CD4-positive, alpha-beta memory T cell (primary cell): ENCODE measurements at regions of chr16 and their contacts with region 1.

Region 1: DNA sequence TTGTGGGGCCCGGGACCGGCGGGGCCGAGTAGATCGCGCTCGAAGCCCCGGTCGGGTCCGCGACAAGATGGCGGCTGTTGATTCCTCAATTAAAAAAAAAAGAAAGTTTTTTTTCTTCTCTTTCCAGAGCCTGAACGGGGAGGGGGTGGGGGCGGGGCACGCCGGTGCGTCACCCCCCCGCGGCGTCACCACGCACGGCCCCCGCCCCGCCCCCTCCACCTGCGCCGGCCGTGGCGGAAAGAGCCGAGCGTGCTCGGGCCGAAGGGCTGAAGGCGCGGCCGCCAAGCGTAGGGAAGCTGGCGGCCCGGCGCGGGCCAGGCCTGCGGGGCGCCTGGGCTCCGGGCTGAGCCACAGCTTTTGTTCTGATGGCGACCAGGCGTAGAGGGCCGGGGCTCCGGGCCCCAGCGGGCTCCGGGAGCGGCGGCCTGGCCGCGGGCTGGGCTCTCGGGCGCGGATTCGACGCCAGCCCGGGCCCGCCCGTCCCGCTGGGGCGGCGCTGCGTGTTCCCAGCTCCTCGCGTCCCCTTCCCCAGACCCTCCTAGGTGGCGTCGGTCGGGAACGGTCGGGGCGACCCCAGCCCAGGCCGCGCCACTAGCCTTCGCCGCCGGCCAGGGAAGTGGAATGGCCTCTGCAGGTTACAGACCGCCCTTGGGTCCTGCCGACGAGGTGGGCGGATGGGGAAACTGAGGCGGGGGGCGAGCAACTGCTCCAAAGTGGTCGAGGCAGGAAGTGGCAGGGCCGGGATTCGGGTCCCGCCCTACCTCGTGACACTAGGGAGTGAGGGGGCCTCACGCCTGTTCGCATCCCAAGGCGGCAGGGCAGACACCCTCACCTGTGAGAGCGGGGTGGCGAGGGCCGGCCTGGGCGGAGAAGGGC is at the start of gene CREBBP:
- DNase-seq: peak; percentile 81 to 91 (median 87)
- H3K4me3 ChIP-seq: peak within 1 kb of the TSS; percentile 58 to 74
- H3K4me3 Mint-ChIP-seq: peak within 1 kb of the TSS; percentile 85 to 98 (median 92)
- H3K27ac ChIP-seq: peak within 1 kb of the TSS; percentile 71
- H3K27ac Mint-ChIP-seq: peak within 1 kb of the TSS; percentile 87 to 95 (median 93)
- H3K4me1 ChIP-seq: peaks cover 43% of the 10 kb centered on the region
- H3K4me1 Mint-ChIP-seq: peaks cover 31 to 46% (median 37%) of the 10 kb centered on the region in 4 donors
- H3K27me3 ChIP-seq: no peaks in the 10 kb centered on the region
- H3K27me3 Mint-ChIP-seq: peaks cover 3 to 5% of the 10 kb centered on the region in 2 donors
- total RNA-seq, gene CREBBP: 119 to 133 TPM

Region 2: GRCh38 chr16:3123986-3124886 is 756.6 kb before region 1 on chr16:
- CTCF ChIA-PET with region 1: no interaction called
- POLR2A ChIA-PET with region 1: no interaction called
- intact Hi-C with region 1: no loop called
- DNase-seq: peak; percentile 96 to 97 (median 96)
- H3K4me3 ChIP-seq: peak overlapping the region; percentile 85 to 97
- H3K4me3 Mint-ChIP-seq: peak overlapping the region; percentile 94 to 98 (median 96)
- H3K27ac ChIP-seq: peak overlapping the region; percentile 50
- H3K27ac Mint-ChIP-seq: peak overlapping the region; percentile 95 to 99 (median 97)
- H3K4me1 ChIP-seq: peaks cover 40% of the 10 kb centered on the region
- H3K4me1 Mint-ChIP-seq: peaks cover 18 to 52% (median 32%) of the 10 kb centered on the region in 4 donors
- H3K27me3 ChIP-seq: no peaks in the 10 kb centered on the region
- H3K27me3 Mint-ChIP-seq: no peaks in the 10 kb centered on the region

Region 3: GRCh38 chr16:3587547-3588110 is 293.2 kb before region 1 on chr16:
- CTCF ChIA-PET with region 1: no interaction called
- POLR2A ChIA-PET with region 1: no interaction called
- intact Hi-C with region 1: no loop called
- DNase-seq: no peak
- H3K4me3 ChIP-seq: no peak overlapping the region
- H3K4me3 Mint-ChIP-seq: no peak overlapping the region
- H3K27ac ChIP-seq: no peak overlapping the region
- H3K27ac Mint-ChIP-seq: no peak overlapping the region
- H3K4me1 ChIP-seq: no peaks in the 10 kb centered on the region
- H3K4me1 Mint-ChIP-seq: peaks cover 0 to 4% (median 1%) of the 10 kb centered on the region in 4 donors
- H3K27me3 ChIP-seq: no peaks in the 10 kb centered on the region
- H3K27me3 Mint-ChIP-seq: no peaks in the 10 kb centered on the region

Region 4: DNA sequence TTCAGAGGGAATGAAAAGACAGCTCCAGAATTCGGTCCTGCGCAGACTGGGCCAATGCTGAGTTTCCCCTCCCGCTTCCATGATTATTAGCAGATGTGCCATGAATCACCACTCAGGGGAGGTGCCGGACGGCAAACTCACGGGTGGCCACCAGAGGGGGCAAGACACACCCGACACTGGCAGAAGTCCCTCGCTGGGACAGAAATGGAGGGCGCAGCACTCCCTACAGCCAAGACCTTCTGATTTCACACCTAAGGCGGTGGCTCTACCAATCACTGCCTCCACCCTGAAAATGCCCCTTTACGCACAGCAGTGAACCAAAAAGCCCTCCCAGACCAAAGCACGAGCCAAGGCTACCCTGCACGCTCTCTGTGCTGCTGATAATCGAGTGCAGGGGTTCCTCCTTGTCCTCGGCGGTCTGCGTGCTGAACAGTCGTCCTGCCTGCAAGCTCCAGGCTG is 190.4 kb before region 1 on chr16:
- CTCF ChIA-PET with region 1: interaction called, 9 read pairs
- POLR2A ChIA-PET with region 1: no interaction called
- intact Hi-C with region 1: loop called (anchors 1 kb)
- DNase-seq: peak; percentile 74 to 81 (median 79)
- H3K4me3 ChIP-seq: no peak overlapping the region
- H3K4me3 Mint-ChIP-seq: peak overlapping the region in 3 of 8 donors; percentile 47 to 70 (median 62)
- H3K27ac ChIP-seq: no peak overlapping the region
- H3K27ac Mint-ChIP-seq: peak overlapping the region in 6 of 7 donors; percentile 20 to 77 (median 40)
- H3K4me1 ChIP-seq: peaks cover 7% of the 10 kb centered on the region
- H3K4me1 Mint-ChIP-seq: peaks cover 6 to 14% (median 9%) of the 10 kb centered on the region in 4 donors
- H3K27me3 ChIP-seq: no peaks in the 10 kb centered on the region
- H3K27me3 Mint-ChIP-seq: no peaks in the 10 kb centered on the region

Region 5: GRCh38 chr16:3717235-3718018 is 163.4 kb before region 1 on chr16 and contains the start of gene TRAP1:
- CTCF ChIA-PET with region 1: interaction called, 3 read pairs
- POLR2A ChIA-PET with region 1: interaction called, 6 read pairs
- intact Hi-C with region 1: loop called (anchors 1 kb)
- DNase-seq: peak; percentile 87 to 90 (median 88)
- H3K4me3 ChIP-seq: peak within 1 kb of the TSS; percentile 78 to 79
- H3K4me3 Mint-ChIP-seq: peak within 1 kb of the TSS; percentile 90 to 93 (median 91)
- H3K27ac ChIP-seq: peak within 1 kb of the TSS; percentile 86
- H3K27ac Mint-ChIP-seq: peak within 1 kb of the TSS; percentile 86 to 95 (median 92)
- H3K4me1 ChIP-seq: peaks cover 22% of the 10 kb centered on the region
- H3K4me1 Mint-ChIP-seq: peaks cover 21 to 42% (median 25%) of the 10 kb centered on the region in 4 donors
- H3K27me3 ChIP-seq: no peaks in the 10 kb centered on the region
- H3K27me3 Mint-ChIP-seq: no peaks in the 10 kb centered on the region
- total RNA-seq, gene TRAP1: 101 to 111 TPM

Region 6: GRCh38 chr16:3787924-3788661 is 92.8 kb before region 1 on chr16:
- CTCF ChIA-PET with region 1: no interaction called
- POLR2A ChIA-PET with region 1: no interaction called
- intact Hi-C with region 1: loop called (anchors 2 kb)
- DNase-seq: no peak
- H3K4me3 ChIP-seq: no peak overlapping the region
- H3K4me3 Mint-ChIP-seq: peak overlapping the region in 1 of 8 donors; percentile 8
- H3K27ac ChIP-seq: no peak overlapping the region
- H3K27ac Mint-ChIP-seq: peak overlapping the region in 1 of 7 donors; percentile 42
- H3K4me1 ChIP-seq: peaks cover 33% of the 10 kb centered on the region
- H3K4me1 Mint-ChIP-seq: peaks cover 30 to 64% (median 52%) of the 10 kb centered on the region in 4 donors
- H3K27me3 ChIP-seq: no peaks in the 10 kb centered on the region
- H3K27me3 Mint-ChIP-seq: no peaks in the 10 kb centered on the region

Region 7: DNA sequence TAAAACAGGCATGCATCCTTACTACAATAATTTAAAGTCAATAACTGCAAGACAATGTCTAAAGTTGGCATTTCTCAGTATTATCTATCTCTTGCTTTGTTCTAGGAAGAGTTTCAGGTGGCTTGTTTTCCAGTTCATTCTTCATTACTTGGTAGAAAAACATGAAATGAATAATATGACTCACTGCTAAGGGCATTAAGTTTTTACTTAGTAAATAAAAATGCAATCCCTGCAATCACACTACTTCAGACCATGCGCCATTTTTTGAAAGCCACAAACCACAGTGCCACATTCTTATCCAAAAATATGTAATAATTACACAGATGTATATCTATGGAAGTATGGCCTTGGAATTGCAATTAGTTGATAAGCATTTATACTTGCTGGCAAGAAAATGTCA is 55.8 kb before region 1 on chr16:
- CTCF ChIA-PET with region 1: no interaction called
- POLR2A ChIA-PET with region 1: no interaction called
- intact Hi-C with region 1: no loop called
- DNase-seq: no peak
- H3K4me3 ChIP-seq: no peak overlapping the region
- H3K4me3 Mint-ChIP-seq: peak overlapping the region in 6 of 8 donors; percentile 47 to 79 (median 64)
- H3K27ac ChIP-seq: no peak overlapping the region
- H3K27ac Mint-ChIP-seq: peak overlapping the region in 1 of 7 donors; percentile 43
- H3K4me1 ChIP-seq: peaks cover 85% of the 10 kb centered on the region
- H3K4me1 Mint-ChIP-seq: peaks cover 69 to 96% (median 80%) of the 10 kb centered on the region in 4 donors
- H3K27me3 ChIP-seq: no peaks in the 10 kb centered on the region
- H3K27me3 Mint-ChIP-seq: no peaks in the 10 kb centered on the region

Region 8: DNA sequence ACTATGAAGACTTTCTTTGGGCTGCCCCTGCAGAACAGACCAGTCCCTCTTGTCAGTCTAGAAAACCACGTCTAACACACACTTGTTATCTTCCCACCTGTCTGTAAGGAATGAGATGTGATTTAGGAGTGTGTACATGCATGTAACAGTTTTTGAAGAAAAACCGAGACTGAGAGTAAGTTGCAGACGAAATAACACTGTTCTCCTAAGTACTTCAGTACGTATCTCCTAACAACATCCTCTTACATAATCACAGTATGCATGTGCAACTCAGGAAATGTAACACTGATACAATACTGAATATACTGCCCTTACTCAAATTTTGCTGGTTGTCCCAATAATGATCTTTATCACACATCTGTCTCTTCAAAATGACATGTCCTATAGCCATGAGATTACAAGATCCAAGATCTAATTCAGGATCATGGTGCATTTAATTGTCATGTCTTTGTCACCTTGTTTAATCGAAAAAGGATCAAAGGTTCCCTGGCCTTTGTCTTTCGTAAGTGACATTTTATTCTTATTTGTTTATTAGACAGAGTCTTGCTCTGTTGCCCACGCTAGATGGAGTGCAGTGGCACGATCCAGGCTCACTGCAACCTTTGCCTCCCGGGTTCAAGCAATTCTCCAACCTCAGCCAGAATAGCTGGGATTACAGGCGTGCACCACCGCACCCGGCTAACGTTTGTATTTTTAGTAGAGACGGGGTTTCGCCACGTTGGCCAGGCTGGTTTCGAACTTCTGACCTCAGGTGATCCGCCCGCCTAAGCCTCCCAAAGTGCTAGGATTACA is 25.9 kb before region 1 on chr16:
- CTCF ChIA-PET with region 1: no interaction called
- POLR2A ChIA-PET with region 1: no interaction called
- intact Hi-C with region 1: no loop called
- DNase-seq: no peak
- H3K4me3 ChIP-seq: no peak overlapping the region
- H3K4me3 Mint-ChIP-seq: peak overlapping the region in 3 of 8 donors; percentile 1 to 21 (median 11)
- H3K27ac ChIP-seq: no peak overlapping the region
- H3K27ac Mint-ChIP-seq: peak overlapping the region; percentile 14 to 89 (median 48)
- H3K4me1 ChIP-seq: peaks cover 59% of the 10 kb centered on the region
- H3K4me1 Mint-ChIP-seq: peaks cover 52 to 80% (median 63%) of the 10 kb centered on the region in 4 donors
- H3K27me3 ChIP-seq: no peaks in the 10 kb centered on the region
- H3K27me3 Mint-ChIP-seq: no peaks in the 10 kb centered on the region

Region 9: DNA sequence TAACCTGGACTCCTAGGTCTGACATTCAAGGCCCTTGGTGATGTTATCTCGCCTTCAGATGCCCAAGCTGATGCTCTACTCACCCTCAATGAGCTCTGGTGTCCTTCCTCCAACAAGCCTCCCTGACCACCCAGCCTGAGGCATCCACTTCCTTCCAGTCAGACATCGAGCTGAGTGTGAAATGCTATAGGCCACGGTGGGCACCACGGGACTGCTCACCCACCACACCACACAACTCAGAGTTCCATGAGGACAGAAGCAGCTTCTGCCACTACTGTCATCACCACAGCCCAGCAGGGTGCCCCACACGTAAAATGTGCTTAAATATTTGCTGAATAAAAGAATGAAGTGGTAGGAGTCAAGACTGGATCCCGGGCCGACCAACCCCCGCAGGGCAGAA is 12.3 kb before region 1 on chr16:
- CTCF ChIA-PET with region 1: interaction called, 6 read pairs
- POLR2A ChIA-PET with region 1: interaction called, 10 read pairs
- intact Hi-C with region 1: no loop called
- DNase-seq: no peak
- H3K4me3 ChIP-seq: no peak overlapping the region
- H3K4me3 Mint-ChIP-seq: peak overlapping the region in 6 of 8 donors; percentile 9 to 65 (median 41)
- H3K27ac ChIP-seq: no peak overlapping the region
- H3K27ac Mint-ChIP-seq: peak overlapping the region in 5 of 7 donors; percentile 46 to 66 (median 61)
- H3K4me1 ChIP-seq: peaks cover 100% of the 10 kb centered on the region
- H3K4me1 Mint-ChIP-seq: peaks cover 63 to 95% (median 80%) of the 10 kb centered on the region in 4 donors
- H3K27me3 ChIP-seq: no peaks in the 10 kb centered on the region
- H3K27me3 Mint-ChIP-seq: peaks cover 0 to 1% of the 10 kb centered on the region in 2 donors